CD14-positive monocyte (primary cell): ENCODE measurements at regions of chr7 and their contacts with region 1.

Region 1: GRCh38 chr7:44999245-45000095 is 531 bp upstream of the CCM2 start:
- DNase-seq: peak; percentile 94 to 98 (median 97)
- H3K4me3 ChIP-seq: peak overlapping the region; percentile 48 to 88 (median 83)
- H3K4me3 Mint-ChIP-seq: peak overlapping the region; percentile 97 to 98
- H3K27ac ChIP-seq: peak overlapping the region; percentile 75 to 86
- H3K27ac Mint-ChIP-seq: peak overlapping the region; percentile 91 to 99 (median 98)
- H3K4me1 ChIP-seq: peaks cover 21 to 34% of the 10 kb centered on the region in 2 donors
- H3K4me1 Mint-ChIP-seq: peaks cover 33% of the 10 kb centered on the region
- H3K27me3 ChIP-seq: no peaks in the 10 kb centered on the region
- H3K27me3 Mint-ChIP-seq: no peaks in the 10 kb centered on the region
- CTCF ChIP-seq: no peak

Region 2: DNA sequence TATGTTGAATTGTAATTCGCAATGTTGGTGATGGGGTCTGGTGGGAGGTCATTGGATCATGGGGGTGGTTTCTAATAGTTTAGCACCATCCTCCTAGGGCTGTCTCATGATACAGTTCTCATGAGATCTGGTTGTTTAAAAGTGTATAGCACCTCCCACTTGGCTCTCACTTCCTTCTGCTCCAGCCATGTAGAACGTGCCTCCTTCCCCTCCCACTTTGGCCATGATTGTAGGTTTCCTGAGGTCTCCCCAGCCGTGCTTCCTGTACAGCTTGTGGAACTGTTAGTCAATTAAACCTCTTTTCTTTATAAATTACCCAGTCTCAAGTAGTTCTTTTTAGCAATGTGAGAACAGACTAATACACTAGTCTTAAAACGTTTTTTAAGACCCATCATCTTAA is 1902.6 kb before region 1 on chr7:
- intact Hi-C with region 1: no loop called
- DNase-seq: no peak
- H3K4me3 ChIP-seq: no peak overlapping the region
- H3K4me3 Mint-ChIP-seq: no peak overlapping the region
- H3K27ac ChIP-seq: no peak overlapping the region
- H3K27ac Mint-ChIP-seq: no peak overlapping the region
- H3K4me1 ChIP-seq: no peaks in the 10 kb centered on the region
- H3K4me1 Mint-ChIP-seq: no peaks in the 10 kb centered on the region
- H3K27me3 ChIP-seq: no peaks in the 10 kb centered on the region
- H3K27me3 Mint-ChIP-seq: peaks cover 0 to 4% (median 3%) of the 10 kb centered on the region in 3 donors
- CTCF ChIP-seq: no peak

Region 3: DNA sequence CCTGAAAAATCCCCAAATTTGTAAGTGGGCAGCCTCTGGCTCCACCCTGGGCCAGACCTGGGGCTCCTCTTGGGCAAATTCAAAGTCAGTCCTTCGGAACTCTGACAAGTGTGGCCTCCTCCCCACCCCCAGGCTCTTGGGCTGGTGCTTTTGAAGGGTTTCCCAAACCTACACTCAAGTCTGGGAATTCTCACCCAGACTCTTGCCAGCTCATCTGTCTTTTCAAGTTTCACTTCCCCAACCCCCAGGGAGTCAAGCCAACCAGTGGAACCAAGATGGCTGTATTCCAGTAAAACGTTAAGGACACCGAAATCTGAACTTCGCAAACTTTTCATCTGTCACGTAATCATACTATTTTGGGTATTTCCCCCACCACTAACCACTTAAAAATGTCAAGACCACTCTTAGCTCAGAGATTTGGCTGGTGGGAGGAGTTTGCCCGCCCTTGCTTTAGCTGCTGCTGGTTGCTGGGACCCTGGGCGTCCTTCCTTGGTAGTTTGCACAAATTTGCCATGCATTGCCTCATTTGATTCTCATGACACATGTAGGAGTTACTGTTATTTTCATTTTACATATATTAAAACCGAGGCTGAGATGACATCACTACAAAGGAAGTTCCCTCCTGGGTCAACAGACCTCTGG is 19.0 kb before region 1 on chr7:
- intact Hi-C with region 1: loop called in 1 of 2 experiments (anchors 2 kb)
- DNase-seq: peak; percentile 95 to 99 (median 97)
- H3K4me3 ChIP-seq: peak overlapping the region in 1 of 3 experiments; percentile 99
- H3K4me3 Mint-ChIP-seq: peak overlapping the region; percentile 97
- H3K27ac ChIP-seq: peak overlapping the region; percentile 99 to 100
- H3K27ac Mint-ChIP-seq: peak overlapping the region; percentile 99 to 100 (median 99)
- H3K4me1 ChIP-seq: peaks cover 72 to 81% of the 10 kb centered on the region in 2 donors
- H3K4me1 Mint-ChIP-seq: peaks cover 72% of the 10 kb centered on the region
- H3K27me3 ChIP-seq: no peaks in the 10 kb centered on the region
- H3K27me3 Mint-ChIP-seq: peaks cover 0 to 6% (median 0%) of the 10 kb centered on the region in 3 donors
- CTCF ChIP-seq: no peak

Region 4: GRCh38 chr7:45015313-45015712 is 15.8 kb after region 1 on chr7:
- intact Hi-C with region 1: no loop called
- DNase-seq: no peak
- H3K4me3 ChIP-seq: no peak overlapping the region
- H3K4me3 Mint-ChIP-seq: no peak overlapping the region
- H3K27ac ChIP-seq: peak overlapping the region in 1 of 2 donors; percentile 53
- H3K27ac Mint-ChIP-seq: peak overlapping the region in 4 of 7 donors; percentile 6 to 77 (median 49)
- H3K4me1 ChIP-seq: no peaks in the 10 kb centered on the region
- H3K4me1 Mint-ChIP-seq: peaks cover 15% of the 10 kb centered on the region
- H3K27me3 ChIP-seq: no peaks in the 10 kb centered on the region
- H3K27me3 Mint-ChIP-seq: peaks cover 0 to 2% (median 0%) of the 10 kb centered on the region in 3 donors
- CTCF ChIP-seq: no peak

Region 5: GRCh38 chr7:45026984-45027773 is 27.7 kb after region 1 on chr7:
- intact Hi-C with region 1: loop called in 1 of 2 experiments (anchors 2 kb)
- DNase-seq: peak; percentile 65 to 83 (median 80)
- H3K4me3 ChIP-seq: peak overlapping the region; percentile 81 to 96 (median 84)
- H3K4me3 Mint-ChIP-seq: peak overlapping the region; percentile 92 to 96
- H3K27ac ChIP-seq: peak overlapping the region; percentile 82 to 91
- H3K27ac Mint-ChIP-seq: peak overlapping the region; percentile 89 to 97 (median 93)
- H3K4me1 ChIP-seq: peaks cover 38 to 52% of the 10 kb centered on the region in 2 donors
- H3K4me1 Mint-ChIP-seq: peaks cover 55% of the 10 kb centered on the region
- H3K27me3 ChIP-seq: no peaks in the 10 kb centered on the region
- H3K27me3 Mint-ChIP-seq: peaks cover 0 to 3% (median 2%) of the 10 kb centered on the region in 3 donors
- CTCF ChIP-seq: no peak